Tibial artery (tissue), 4 donors: ENCODE measurements at regions of chr2 and their contacts with region 1.

Region 1: DNA sequence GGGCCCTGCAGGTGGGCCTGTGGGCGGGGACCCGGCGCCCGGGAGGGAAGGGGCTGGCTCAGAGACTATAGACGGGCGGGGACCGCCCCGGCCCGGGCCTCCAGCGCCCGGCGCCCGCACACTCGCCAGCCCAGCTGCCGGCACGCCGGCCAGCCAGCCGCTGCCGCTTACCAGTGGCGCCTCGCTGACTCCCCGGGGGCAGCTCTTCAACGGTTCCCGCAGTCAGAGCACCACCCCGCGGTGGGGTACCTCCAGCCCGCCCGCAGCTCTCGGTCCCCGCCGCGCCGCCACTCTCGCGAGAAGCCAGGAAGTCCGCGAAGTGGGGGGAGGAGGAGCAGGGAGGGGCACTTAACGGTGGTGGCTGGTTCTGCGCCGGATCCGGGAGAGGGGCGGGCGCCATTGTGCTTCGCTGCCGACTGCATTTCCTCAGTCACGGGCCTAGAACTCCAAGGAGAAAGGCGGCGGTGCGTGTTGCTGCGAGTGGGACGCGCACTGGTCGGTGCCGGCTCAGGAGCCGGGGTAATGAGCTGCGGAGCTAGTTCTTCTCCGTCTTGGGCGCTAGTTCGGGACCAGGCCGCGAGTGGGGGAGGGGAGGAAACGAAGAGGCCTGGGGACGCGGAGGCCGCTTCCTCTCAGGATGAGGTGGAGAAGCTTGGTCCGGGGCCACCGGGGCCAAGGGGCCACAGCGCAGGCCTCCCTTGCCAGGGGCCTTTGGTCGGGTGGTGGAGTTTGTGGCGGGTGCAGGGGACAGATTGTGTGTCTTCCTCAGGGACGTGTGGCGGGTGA is at the start of gene MARCHF7:
- DNase-seq: peak; percentile 94 to 99
- H3K4me3 ChIP-seq: peak within 1 kb of the TSS; percentile 79 to 85
- H3K27ac ChIP-seq: peak within 1 kb of the TSS; percentile 93 to 98
- H3K4me1 ChIP-seq: peaks cover 0 to 51% (median 32%) of the 10 kb centered on the region in 4 donors
- H3K27me3 ChIP-seq: no peaks in the 10 kb centered on the region
- CTCF ChIP-seq: peak in 1 of 2 experiments; percentile 40

Region 2: GRCh38 chr2:159286709-159287441 is 425.5 kb before region 1 on chr2:
- intact Hi-C with region 1: loop called (anchors 10 kb)
- DNase-seq: peak; percentile 99
- H3K4me3 ChIP-seq: peak overlapping the region; percentile 78 to 95
- H3K27ac ChIP-seq: peak overlapping the region; percentile 86 to 87
- H3K4me1 ChIP-seq: peaks cover 0 to 27% (median 14%) of the 10 kb centered on the region in 4 donors
- H3K27me3 ChIP-seq: no peaks in the 10 kb centered on the region
- CTCF ChIP-seq: no peak

Region 3: DNA sequence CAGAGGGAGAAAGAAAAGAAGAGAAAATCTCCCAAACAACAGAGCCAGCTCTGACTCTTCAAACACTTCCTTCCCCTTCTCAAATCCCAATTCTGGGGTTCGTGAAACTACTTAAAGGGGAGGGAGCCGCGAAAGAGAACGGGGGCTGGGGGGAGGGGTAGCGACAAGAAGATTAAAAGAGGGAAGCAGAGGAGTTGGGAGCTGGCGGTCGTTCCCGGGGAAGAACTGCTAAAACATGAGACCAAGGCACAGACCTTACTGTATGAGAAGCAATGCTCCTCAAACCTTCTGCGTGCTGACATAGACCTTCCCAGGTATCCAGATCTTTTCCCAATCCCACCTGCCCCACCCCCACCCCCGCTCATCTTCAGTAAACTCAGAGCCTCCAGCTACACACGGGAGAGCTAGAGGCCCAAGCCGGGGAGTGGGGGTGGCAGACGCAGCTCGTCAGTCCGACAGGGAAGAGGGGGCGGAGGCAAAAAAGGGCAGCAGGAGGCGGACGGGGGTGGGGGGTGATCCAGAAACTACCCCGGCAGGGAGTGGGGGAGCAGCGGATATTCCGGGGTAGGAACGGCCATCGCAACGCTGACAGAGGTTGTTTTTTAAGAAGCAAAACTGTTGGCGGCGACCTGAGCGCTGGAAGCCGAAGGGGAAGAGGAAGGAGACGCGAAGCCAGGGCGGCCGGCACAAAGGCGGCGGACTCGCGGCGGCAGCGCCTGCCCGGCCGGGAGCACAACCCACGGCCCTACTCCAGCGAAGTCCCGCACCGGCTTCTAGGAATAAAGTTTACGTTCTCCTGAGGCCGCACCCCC is 97.0 kb before region 1 on chr2:
- intact Hi-C with region 1: loop called (anchors 10 kb)
- DNase-seq: peak; percentile 92 to 94
- H3K4me3 ChIP-seq: peak overlapping the region; percentile 76 to 92
- H3K27ac ChIP-seq: peak overlapping the region; percentile 97 to 100
- H3K4me1 ChIP-seq: peaks cover 0 to 45% (median under 1%) of the 10 kb centered on the region in 4 donors
- H3K27me3 ChIP-seq: no peaks in the 10 kb centered on the region
- CTCF ChIP-seq: no peak